Right ventricle myocardium superior (tissue), 1 donor: ENCODE measurements at regions of chr16 and their contacts with region 1.

Region 1: GRCh38 chr16:67561824-67562525 is 351 bp upstream of the CTCF start:
- DNase-seq: peak; percentile 98
- ATAC-seq: peak; percentile 91

Region 2: GRCh38 chr16:67632415-67633172 is 70.6 kb after region 1 on chr16:
- intact Hi-C with region 1: loop called (anchors 10 kb)
- DNase-seq: peak; percentile 69
- ATAC-seq: peak; percentile 82

Region 3: GRCh38 chr16:67660564-67661028 is 98.6 kb after region 1 on chr16 and contains the start of gene PARD6A:
- intact Hi-C with region 1: loop called (anchors 5 kb)
- DNase-seq: peak; percentile 97
- ATAC-seq: peak; percentile 90
- total RNA-seq, gene PARD6A: 3.2 TPM